WTC11 (cell line): ENCODE measurements at regions of chr21 and their contacts with region 1.

Region 1: DNA sequence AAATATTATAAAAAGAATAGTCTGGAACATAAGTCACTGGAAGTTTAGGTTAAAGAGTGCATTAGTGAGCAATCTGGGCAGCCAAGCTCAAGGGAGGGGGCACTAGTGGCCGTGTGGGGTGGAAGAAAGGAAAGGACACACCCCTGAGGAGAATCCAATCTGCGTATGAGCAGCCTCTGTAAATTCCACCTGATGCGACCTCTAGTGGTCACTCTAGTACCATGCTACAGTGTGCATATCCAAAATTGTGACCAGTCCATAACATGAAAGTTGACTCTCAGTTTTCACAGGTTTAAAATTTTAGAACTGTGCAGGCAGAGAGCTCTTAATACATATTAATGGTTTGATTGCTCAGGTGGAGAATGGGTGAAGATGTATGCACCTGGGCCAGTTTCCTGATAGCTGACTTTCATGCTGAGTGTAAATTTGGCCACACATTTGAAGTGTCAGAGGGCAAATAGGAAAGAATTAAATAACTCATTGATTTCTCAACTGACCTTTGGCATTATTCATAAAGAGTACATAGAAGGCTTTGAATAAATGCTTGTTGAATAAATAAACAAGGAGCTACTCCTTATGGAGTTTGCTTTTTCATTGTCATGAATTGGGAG is 105.9 kb upstream of the C21orf91 start:
- DNase-seq: peak; percentile 53
- ATAC-seq: peak; percentile 99
- H3K4me3 Mint-ChIP-seq: no peak overlapping the region
- H3K27ac Mint-ChIP-seq: no peak overlapping the region
- H3K4me1 Mint-ChIP-seq: peaks cover 23% of the 10 kb centered on the region
- H3K27me3 Mint-ChIP-seq: no peaks in the 10 kb centered on the region
- CTCF ChIP-seq: peak; percentile 78

Region 2: GRCh38 chr21:17667256-17667655 is 257.8 kb before region 1 on chr21:
- CTCF ChIA-PET with region 1: no interaction called
- POLR2A ChIA-PET with region 1: no interaction called
- DNase-seq: no peak
- ATAC-seq: peak; percentile 57
- H3K4me3 Mint-ChIP-seq: no peak overlapping the region
- H3K27ac Mint-ChIP-seq: no peak overlapping the region
- H3K4me1 Mint-ChIP-seq: peaks cover 32% of the 10 kb centered on the region
- H3K27me3 Mint-ChIP-seq: peaks cover 98% of the 10 kb centered on the region
- CTCF ChIP-seq: no peak

Region 3: GRCh38 chr21:17903029-17903806 is 21.9 kb before region 1 on chr21:
- CTCF ChIA-PET with region 1: interaction called, 11 read pairs
- POLR2A ChIA-PET with region 1: no interaction called
- DNase-seq: no peak
- ATAC-seq: peak; percentile 56
- H3K4me3 Mint-ChIP-seq: no peak overlapping the region
- H3K27ac Mint-ChIP-seq: peak overlapping the region; percentile 67
- H3K4me1 Mint-ChIP-seq: peaks cover 61% of the 10 kb centered on the region
- H3K27me3 Mint-ChIP-seq: no peaks in the 10 kb centered on the region
- CTCF ChIP-seq: no peak

Region 4: GRCh38 chr21:17989780-17990179 is 64.7 kb after region 1 on chr21:
- CTCF ChIA-PET with region 1: interaction called, 13 read pairs
- POLR2A ChIA-PET with region 1: no interaction called
- DNase-seq: no peak
- ATAC-seq: peak; percentile 99
- H3K4me3 Mint-ChIP-seq: peak overlapping the region; percentile 52
- H3K27ac Mint-ChIP-seq: peak overlapping the region; percentile 76; the same call in 1 of the 2 replicates
- H3K4me1 Mint-ChIP-seq: peaks cover 25% of the 10 kb centered on the region
- H3K27me3 Mint-ChIP-seq: no peaks in the 10 kb centered on the region
- CTCF ChIP-seq: no peak